CD14-positive monocyte (primary cell): ENCODE measurements at regions of chr7 and their contacts with region 1.

Region 1: GRCh38 chr7:158695726-158696452 is 8.7 kb downstream of the NCAPG2 start:
- DNase-seq: peak; percentile 85 to 94 (median 90)
- H3K4me3 ChIP-seq: peak overlapping the region in 1 of 3 experiments; percentile 23
- H3K4me3 Mint-ChIP-seq: peak overlapping the region in 1 of 2 donors; percentile 75
- H3K27ac ChIP-seq: peak overlapping the region in 1 of 2 donors; percentile 67
- H3K27ac Mint-ChIP-seq: peak overlapping the region in 6 of 7 donors; percentile 24 to 92 (median 80)
- H3K4me1 ChIP-seq: peaks cover 8% of the 10 kb centered on the region in 2 donors
- H3K4me1 Mint-ChIP-seq: peaks cover 14% of the 10 kb centered on the region
- H3K27me3 ChIP-seq: no peaks in the 10 kb centered on the region
- H3K27me3 Mint-ChIP-seq: no peaks in the 10 kb centered on the region
- CTCF ChIP-seq: peak; percentile 81

Region 2: DNA sequence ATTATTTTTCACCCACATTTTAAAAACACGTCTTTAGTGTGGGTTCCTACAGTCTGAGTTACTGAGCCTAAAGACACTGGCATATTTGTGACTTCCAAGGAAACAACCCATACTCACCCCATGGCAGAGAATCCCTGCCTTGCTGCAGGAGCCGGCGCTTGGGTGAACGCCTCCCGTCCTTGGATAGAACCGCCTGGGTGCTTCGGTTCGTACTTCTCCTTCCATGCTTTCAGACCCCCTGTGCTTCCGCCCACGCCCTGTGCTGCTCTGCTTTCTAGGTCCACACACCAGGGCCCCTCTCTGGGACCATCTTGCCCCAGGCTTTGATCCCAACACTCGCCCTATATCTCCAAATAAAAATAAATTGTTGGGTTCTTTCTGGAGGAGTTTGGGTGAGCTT is 234.1 kb before region 1 on chr7:
- intact Hi-C with region 1: no loop called
- DNase-seq: no peak
- H3K4me3 ChIP-seq: no peak overlapping the region
- H3K4me3 Mint-ChIP-seq: no peak overlapping the region
- H3K27ac ChIP-seq: no peak overlapping the region
- H3K27ac Mint-ChIP-seq: no peak overlapping the region
- H3K4me1 ChIP-seq: no peaks in the 10 kb centered on the region
- H3K4me1 Mint-ChIP-seq: no peaks in the 10 kb centered on the region
- H3K27me3 ChIP-seq: no peaks in the 10 kb centered on the region
- H3K27me3 Mint-ChIP-seq: peaks cover 6 to 11% (median 8%) of the 10 kb centered on the region in 3 donors
- CTCF ChIP-seq: no peak

Region 3: DNA sequence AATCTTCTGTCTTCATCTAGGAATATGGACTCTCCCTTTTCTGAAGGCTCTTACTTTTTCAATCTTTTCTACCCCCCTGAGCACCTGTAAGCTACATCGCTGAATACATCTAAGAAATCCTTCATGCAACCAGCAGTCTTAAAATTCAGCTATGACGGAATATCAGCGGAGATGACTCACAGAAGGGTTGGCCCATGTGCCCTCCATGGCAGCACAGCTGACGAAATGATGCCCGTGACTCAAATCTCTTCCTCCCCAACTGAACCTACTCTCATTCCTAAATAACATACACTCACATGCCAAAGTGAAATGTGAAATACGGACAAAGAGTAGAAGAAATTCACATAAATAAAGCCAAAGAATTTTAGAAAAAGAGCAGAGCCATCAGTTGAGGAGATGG is 39.0 kb after region 1 on chr7:
- intact Hi-C with region 1: loop called (anchors 1 to 5 kb)
- DNase-seq: peak; percentile 65 to 80 (median 72)
- H3K4me3 ChIP-seq: no peak overlapping the region
- H3K4me3 Mint-ChIP-seq: no peak overlapping the region
- H3K27ac ChIP-seq: peak overlapping the region in 1 of 2 donors; percentile 47
- H3K27ac Mint-ChIP-seq: peak overlapping the region; percentile 30 to 86 (median 68)
- H3K4me1 ChIP-seq: peaks cover 24 to 28% of the 10 kb centered on the region in 2 donors
- H3K4me1 Mint-ChIP-seq: peaks cover 27% of the 10 kb centered on the region
- H3K27me3 ChIP-seq: no peaks in the 10 kb centered on the region
- H3K27me3 Mint-ChIP-seq: no peaks in the 10 kb centered on the region
- CTCF ChIP-seq: no peak

Region 4: GRCh38 chr7:158740013-158740656 is 44.2 kb after region 1 on chr7:
- intact Hi-C with region 1: loop called (anchors 1 to 5 kb)
- DNase-seq: peak; percentile 62 to 89 (median 80)
- H3K4me3 ChIP-seq: peak overlapping the region; percentile 10 to 55 (median 21)
- H3K4me3 Mint-ChIP-seq: peak overlapping the region; percentile 65 to 81
- H3K27ac ChIP-seq: peak overlapping the region; percentile 66 to 82
- H3K27ac Mint-ChIP-seq: peak overlapping the region; percentile 70 to 92 (median 91)
- H3K4me1 ChIP-seq: peaks cover 21 to 27% of the 10 kb centered on the region in 2 donors
- H3K4me1 Mint-ChIP-seq: peaks cover 24% of the 10 kb centered on the region
- H3K27me3 ChIP-seq: no peaks in the 10 kb centered on the region
- H3K27me3 Mint-ChIP-seq: no peaks in the 10 kb centered on the region
- CTCF ChIP-seq: no peak

Region 5: DNA sequence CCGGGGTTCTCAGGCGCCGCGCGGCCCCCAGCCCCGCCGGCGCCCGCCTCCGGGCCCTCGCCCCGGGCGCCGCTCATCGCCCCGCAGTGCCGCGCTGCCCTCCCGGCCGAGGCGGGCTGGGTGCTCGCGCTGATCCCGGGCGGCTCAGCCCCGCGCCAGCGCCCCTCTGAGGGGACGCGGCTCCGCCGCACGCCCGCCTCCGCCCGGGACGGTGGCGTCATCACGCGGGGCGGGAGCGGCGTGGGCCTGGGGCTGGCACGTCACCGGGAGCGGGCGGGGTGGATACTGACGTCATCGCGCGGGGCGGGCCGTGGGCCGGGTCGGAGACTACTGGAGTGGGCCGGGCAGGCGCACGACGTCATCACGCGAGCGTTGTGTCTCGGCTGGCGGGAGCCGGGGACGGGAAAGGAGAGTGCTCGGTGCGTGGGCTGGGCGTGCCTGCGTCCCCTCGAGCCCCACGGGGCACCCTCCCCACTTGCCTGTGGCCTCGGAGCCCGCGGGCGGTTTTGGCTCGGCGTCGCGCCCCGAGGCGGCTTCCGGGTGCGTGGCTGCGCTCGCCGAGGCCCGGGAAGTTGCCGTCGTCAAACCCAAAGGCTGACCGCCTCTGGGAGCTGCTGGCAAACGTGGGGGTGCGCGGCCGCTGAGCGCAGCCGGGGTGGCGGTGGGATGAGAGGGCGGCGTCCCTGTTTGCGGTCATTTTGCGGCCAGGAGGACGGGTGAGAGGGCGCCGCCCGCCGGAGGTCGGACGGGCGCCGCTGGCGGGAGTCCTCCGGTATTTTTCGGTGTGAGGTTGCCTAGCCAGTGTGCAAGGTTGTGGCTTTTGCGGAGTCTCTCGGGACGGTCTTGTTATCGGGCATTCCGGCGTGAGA is 133.7 kb after region 1 on chr7 and contains the start of gene ESYT2:
- intact Hi-C with region 1: loop called (anchors 5 to 10 kb)
- DNase-seq: peak; percentile 98 to 99 (median 98)
- H3K4me3 ChIP-seq: peak within 1 kb of the TSS; percentile 75 to 97 (median 97)
- H3K4me3 Mint-ChIP-seq: peak within 1 kb of the TSS; percentile 90 to 98
- H3K27ac ChIP-seq: peak within 1 kb of the TSS; percentile 96 to 99
- H3K27ac Mint-ChIP-seq: peak within 1 kb of the TSS; percentile 93 to 97 (median 95)
- H3K4me1 ChIP-seq: peaks cover 22 to 23% of the 10 kb centered on the region in 2 donors
- H3K4me1 Mint-ChIP-seq: peaks cover 26% of the 10 kb centered on the region
- H3K27me3 ChIP-seq: no peaks in the 10 kb centered on the region
- H3K27me3 Mint-ChIP-seq: no peaks in the 10 kb centered on the region
- CTCF ChIP-seq: no peak
- polyA plus RNA-seq, gene ESYT2: 14.0 to 24.1 (median 22.0) TPM

Region 6: GRCh38 chr7:158856883-158857668 is 161.2 kb after region 1 on chr7:
- intact Hi-C with region 1: loop called (anchors 10 kb)
- DNase-seq: no peak
- H3K4me3 ChIP-seq: peak overlapping the region; percentile 56 to 89 (median 67)
- H3K4me3 Mint-ChIP-seq: peak overlapping the region; percentile 96 to 99
- H3K27ac ChIP-seq: peak overlapping the region in 1 of 2 donors; percentile 65
- H3K27ac Mint-ChIP-seq: no peak overlapping the region
- H3K4me1 ChIP-seq: peaks cover 2 to 14% of the 10 kb centered on the region in 2 donors
- H3K4me1 Mint-ChIP-seq: peaks cover 3% of the 10 kb centered on the region
- H3K27me3 ChIP-seq: no peaks in the 10 kb centered on the region
- H3K27me3 Mint-ChIP-seq: peaks cover 1 to 7% (median 3%) of the 10 kb centered on the region in 3 donors
- CTCF ChIP-seq: no peak

Region 7: DNA sequence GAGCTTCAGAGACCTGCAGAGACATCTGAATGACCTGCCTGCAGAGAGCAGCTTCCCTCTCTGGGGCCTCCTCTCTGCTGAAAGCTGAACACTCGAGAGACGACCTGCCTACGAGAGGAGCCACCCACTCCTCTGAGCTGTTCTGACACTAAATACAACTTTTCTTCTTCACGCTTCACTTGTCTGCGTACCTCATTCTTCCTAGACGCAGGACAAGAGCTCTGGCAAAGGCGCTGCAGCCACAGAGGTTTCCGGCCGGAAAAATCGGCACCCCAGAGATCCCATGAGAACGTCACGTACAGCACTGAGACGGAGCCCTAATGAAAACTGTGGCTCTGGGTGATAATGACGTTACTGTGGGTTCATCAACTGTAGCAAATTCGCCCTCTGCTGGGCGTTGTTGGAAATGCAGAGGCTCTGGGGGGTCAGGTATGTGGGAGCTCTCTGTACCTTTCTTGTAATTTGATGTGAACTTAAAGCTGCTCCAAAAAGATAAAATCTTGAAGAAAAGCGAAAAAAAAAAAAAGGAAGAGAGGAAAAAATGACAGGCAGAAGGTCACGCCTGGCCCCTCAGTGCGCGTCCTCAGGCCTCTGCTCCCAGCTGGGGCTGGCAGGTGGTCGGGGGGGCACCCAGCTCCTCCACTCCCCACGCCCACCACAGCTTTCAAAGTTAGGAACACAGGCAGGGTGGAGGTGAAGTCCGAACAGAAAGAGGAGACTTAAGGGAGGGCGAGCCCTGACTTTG is 281.1 kb after region 1 on chr7:
- intact Hi-C with region 1: loop called (anchors 2 kb)
- DNase-seq: peak; percentile 66 to 80 (median 71)
- H3K4me3 ChIP-seq: peak overlapping the region; percentile 51 to 78 (median 76)
- H3K4me3 Mint-ChIP-seq: peak overlapping the region; percentile 95 to 99
- H3K27ac ChIP-seq: peak overlapping the region; percentile 51 to 66
- H3K27ac Mint-ChIP-seq: peak overlapping the region; percentile 26 to 94 (median 88)
- H3K4me1 ChIP-seq: peaks cover 7 to 12% of the 10 kb centered on the region in 2 donors
- H3K4me1 Mint-ChIP-seq: peaks cover 8% of the 10 kb centered on the region
- H3K27me3 ChIP-seq: no peaks in the 10 kb centered on the region
- H3K27me3 Mint-ChIP-seq: peaks cover 1 to 4% (median 3%) of the 10 kb centered on the region in 3 donors
- CTCF ChIP-seq: peak; percentile 93